MCF 10A (cell line): ENCODE measurements at regions of chr4 and their contacts with region 1.

Region 1: GRCh38 chr4:164621886-164622521 is 131.9 kb upstream of the SMIM31 start:
- DNase-seq: peak; percentile 84
- H3K4me3 Mint-ChIP-seq: peak overlapping the region; percentile 12
- H3K27ac Mint-ChIP-seq: peak overlapping the region; percentile 75
- H3K4me1 Mint-ChIP-seq: peaks cover 17% of the 10 kb centered on the region
- H3K27me3 Mint-ChIP-seq: no peaks in the 10 kb centered on the region
- CTCF ChIP-seq: no peak

Region 2: DNA sequence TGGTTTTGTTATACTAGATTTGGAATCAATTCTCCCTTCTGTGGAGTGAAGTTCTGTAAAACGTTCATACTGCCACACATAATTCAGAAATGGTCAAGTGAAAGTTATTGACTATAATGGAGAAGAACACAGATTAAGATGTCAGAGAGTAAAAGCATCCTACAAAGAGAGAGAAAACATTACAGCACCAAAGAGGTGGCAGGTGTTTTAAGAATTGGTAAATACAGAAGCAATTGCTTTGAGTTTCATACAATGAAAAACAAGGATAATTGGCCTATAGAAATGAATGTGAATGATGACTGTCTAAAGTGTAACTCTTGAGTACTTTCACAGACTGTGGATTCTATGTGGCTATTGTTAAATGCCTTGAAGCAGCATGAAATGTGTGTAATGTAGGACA is 303.7 kb before region 1 on chr4:
- CTCF ChIA-PET with region 1: no interaction called
- POLR2A ChIA-PET with region 1: no interaction called
- intact Hi-C with region 1: loop called (anchors 10 kb)
- DNase-seq: no peak
- H3K4me3 Mint-ChIP-seq: no peak overlapping the region
- H3K27ac Mint-ChIP-seq: no peak overlapping the region
- H3K4me1 Mint-ChIP-seq: no peaks in the 10 kb centered on the region
- H3K27me3 Mint-ChIP-seq: no peaks in the 10 kb centered on the region
- CTCF ChIP-seq: no peak

Region 3: GRCh38 chr4:164606478-164606877 is 15.5 kb before region 1 on chr4:
- CTCF ChIA-PET with region 1: no interaction called
- POLR2A ChIA-PET with region 1: no interaction called
- intact Hi-C with region 1: no loop called
- DNase-seq: no peak
- H3K4me3 Mint-ChIP-seq: no peak overlapping the region
- H3K27ac Mint-ChIP-seq: no peak overlapping the region
- H3K4me1 Mint-ChIP-seq: no peaks in the 10 kb centered on the region
- H3K27me3 Mint-ChIP-seq: no peaks in the 10 kb centered on the region
- CTCF ChIP-seq: no peak

Region 4: GRCh38 chr4:164639001-164639400 is 17.0 kb after region 1 on chr4:
- CTCF ChIA-PET with region 1: no interaction called
- POLR2A ChIA-PET with region 1: interaction called, 14 read pairs
- intact Hi-C with region 1: no loop called
- DNase-seq: peak; percentile 34
- H3K4me3 Mint-ChIP-seq: no peak overlapping the region
- H3K27ac Mint-ChIP-seq: peak overlapping the region; percentile 57
- H3K4me1 Mint-ChIP-seq: peaks cover 19% of the 10 kb centered on the region
- H3K27me3 Mint-ChIP-seq: no peaks in the 10 kb centered on the region
- CTCF ChIP-seq: no peak

Region 5: DNA sequence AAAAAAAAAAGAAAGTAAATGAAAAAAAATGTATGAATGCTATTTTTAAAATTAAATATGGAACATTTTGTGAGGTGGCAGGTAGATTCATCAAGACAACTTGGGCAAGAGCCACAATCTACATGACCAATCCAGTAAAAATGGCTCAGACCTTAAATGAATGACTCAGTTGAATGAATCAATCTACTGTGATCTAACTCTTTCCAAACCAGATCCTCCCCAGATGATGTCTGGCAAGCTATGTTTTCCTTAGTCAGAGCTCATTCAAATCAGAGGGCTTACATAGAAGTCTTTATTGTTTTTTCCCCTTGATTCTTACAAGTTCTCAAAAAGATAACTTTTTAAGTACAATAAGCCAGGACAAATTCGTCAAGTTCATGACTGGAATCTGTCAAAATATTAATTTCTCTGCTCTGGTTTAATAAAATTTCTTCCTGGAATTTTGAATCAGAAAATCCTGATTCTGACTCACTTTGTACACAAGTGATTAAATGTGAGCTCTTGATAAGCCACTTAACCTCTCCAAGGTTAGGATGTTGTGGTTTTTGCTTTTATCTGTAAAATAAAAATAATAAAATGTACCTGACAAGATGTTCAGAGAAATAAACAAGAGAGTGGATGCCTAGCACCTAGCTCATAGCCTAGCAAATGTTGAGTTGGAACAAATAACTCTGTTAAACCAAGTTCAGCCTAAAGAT is 26.3 kb after region 1 on chr4:
- CTCF ChIA-PET with region 1: interaction called, 3 read pairs
- POLR2A ChIA-PET with region 1: interaction called, 13 read pairs
- intact Hi-C with region 1: no loop called
- DNase-seq: peak; percentile 83
- H3K4me3 Mint-ChIP-seq: no peak overlapping the region
- H3K27ac Mint-ChIP-seq: peak overlapping the region; percentile 75
- H3K4me1 Mint-ChIP-seq: peaks cover 11% of the 10 kb centered on the region
- H3K27me3 Mint-ChIP-seq: no peaks in the 10 kb centered on the region
- CTCF ChIP-seq: no peak